Activated naive CD4-positive, alpha-beta T cell treated with anti-CD3 and anti-CD28 coated beads for 36 hours (primary cell): ENCODE measurements at regions of chr6 and their contacts with region 1.

Region 1: DNA sequence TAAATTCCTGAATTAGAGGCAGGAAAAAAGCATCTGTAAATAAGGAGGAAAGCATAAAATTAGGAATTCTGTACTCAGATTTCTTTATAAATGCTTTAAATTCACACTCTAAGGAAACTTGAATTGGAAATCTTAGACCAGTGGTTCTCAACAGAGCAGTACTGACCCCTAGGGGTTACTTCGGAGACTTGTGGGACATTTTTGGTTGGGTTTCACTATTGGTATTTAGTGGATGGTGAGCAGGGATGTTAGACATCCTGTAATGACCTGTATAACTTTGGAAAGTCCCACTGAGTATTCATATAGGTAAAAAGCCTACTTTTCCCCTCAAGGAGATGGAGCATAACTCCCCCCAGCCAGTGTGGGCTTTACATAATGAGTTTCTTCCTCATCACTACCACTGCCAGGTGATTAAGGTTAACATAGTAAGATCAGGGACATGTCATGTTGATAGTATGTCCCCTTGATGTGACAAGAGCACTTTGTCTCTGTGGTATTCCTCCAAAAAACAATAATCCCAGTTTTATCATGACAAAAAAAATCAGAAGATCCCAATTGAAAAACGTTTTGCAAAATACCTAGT is 31.0 kb downstream of the GLO1 start:
- DNase-seq: peak; percentile 56
- H3K4me3 Mint-ChIP-seq: no peak overlapping the region
- H3K27ac Mint-ChIP-seq: peak overlapping the region; percentile 66
- H3K4me1 Mint-ChIP-seq: peaks cover 45% of the 10 kb centered on the region
- H3K27me3 Mint-ChIP-seq: no peaks in the 10 kb centered on the region

Region 2: GRCh38 chr6:37516076-37516919 is 1155.7 kb before region 1 on chr6:
- CTCF ChIA-PET with region 1: no interaction called
- intact Hi-C with region 1: loop called (anchors 10 kb)
- DNase-seq: peak; percentile 98
- H3K4me3 Mint-ChIP-seq: peak overlapping the region; percentile 72
- H3K27ac Mint-ChIP-seq: peak overlapping the region; percentile 97
- H3K4me1 Mint-ChIP-seq: peaks cover 82% of the 10 kb centered on the region
- H3K27me3 Mint-ChIP-seq: no peaks in the 10 kb centered on the region

Region 3: DNA sequence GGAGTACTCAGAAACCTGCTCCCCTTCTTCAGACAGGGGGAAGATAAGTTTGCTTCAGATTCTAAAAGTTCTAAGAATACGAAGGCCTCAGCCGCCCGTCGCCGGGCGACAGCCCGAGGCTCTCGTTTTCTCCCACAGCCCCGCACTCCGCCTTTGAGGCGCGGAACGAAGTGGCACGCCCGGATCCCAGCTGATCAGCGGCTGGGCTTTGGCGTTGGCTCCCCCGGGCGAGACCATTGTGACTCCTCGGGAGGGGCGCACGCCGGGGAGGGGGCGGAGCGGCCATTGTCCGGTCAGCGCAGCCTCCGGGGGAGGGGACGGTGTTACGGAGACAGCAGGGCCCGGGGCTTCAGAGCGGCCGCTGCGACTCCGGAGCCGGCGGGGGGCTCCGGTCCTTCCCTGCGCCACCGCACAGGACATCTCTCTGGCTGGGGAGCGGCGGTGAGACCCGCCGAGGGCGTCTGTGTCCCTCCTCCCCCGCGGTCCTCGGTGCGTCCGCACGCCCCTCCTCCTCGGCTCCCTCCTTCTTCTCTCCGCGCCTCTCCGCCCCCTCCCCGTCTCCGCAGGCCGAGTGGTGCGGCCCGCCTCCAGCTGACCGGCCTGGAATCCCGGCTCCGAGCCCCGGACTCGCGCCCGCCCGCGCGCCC is 852.7 kb before region 1 on chr6 and contains the start of gene ZFAND3:
- CTCF ChIA-PET with region 1: no interaction called
- intact Hi-C with region 1: loop called (anchors 5 kb)
- DNase-seq: peak; percentile 95
- H3K4me3 Mint-ChIP-seq: peak within 1 kb of the TSS; percentile 92
- H3K27ac Mint-ChIP-seq: peak within 1 kb of the TSS; percentile 98
- H3K4me1 Mint-ChIP-seq: peaks cover 52% of the 10 kb centered on the region
- H3K27me3 Mint-ChIP-seq: no peaks in the 10 kb centered on the region
- total RNA-seq, gene ZFAND3: 33.6 to 35.3 TPM

Region 4: GRCh38 chr6:38131527-38131965 is 540.4 kb before region 1 on chr6:
- CTCF ChIA-PET with region 1: no interaction called
- intact Hi-C with region 1: loop called (anchors 2 kb)
- DNase-seq: peak; percentile 33
- H3K4me3 Mint-ChIP-seq: no peak overlapping the region
- H3K27ac Mint-ChIP-seq: peak overlapping the region; percentile 55
- H3K4me1 Mint-ChIP-seq: peaks cover 44% of the 10 kb centered on the region
- H3K27me3 Mint-ChIP-seq: no peaks in the 10 kb centered on the region

Region 5: DNA sequence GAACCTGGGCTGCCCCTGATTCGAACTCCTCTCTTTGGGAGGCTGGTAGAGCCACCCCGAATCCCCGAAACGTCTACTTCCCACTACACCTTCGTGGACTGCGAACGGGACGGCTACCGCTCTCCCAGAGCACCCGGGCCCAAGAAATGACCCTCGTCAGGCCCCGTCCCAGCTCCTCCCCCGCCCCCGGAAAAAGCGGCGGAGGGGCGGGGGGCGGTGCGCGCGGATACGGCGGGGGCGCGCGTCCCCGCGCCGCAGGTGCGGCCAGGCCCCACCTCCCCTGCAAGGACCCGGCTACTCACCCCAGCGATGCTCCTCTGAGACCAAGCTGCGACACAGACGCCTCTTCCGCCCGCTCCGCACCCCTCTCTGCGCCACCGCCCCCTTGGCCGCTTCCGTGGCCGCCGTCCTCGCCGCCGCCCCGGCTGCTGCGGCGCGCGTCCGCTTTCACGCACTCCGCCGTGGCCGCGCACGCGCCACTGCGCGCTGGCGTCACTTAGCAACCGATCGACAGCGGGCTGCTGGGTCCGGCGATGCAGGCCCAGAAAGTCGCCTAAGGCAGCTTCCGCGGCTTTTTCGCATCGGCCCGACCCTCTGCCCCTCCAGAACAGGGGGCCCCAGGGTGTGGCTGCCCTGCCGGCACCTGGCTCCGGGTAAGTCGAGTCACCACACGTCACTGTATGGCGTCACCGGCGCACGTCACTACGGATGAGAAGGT is 32.3 kb before region 1 on chr6 and contains the start of gene BTBD9:
- CTCF ChIA-PET with region 1: no interaction called
- intact Hi-C with region 1: loop called (anchors 1 kb)
- DNase-seq: peak; percentile 79
- H3K4me3 Mint-ChIP-seq: peak within 1 kb of the TSS; percentile 89
- H3K27ac Mint-ChIP-seq: peak within 1 kb of the TSS; percentile 86
- H3K4me1 Mint-ChIP-seq: peaks cover 47% of the 10 kb centered on the region
- H3K27me3 Mint-ChIP-seq: no peaks in the 10 kb centered on the region
- total RNA-seq, gene BTBD9: 9.5 to 11.1 TPM

Region 6: GRCh38 chr6:38755177-38755576 is 83.2 kb after region 1 on chr6:
- CTCF ChIA-PET with region 1: no interaction called
- intact Hi-C with region 1: loop called (anchors 2 kb)
- DNase-seq: no peak
- H3K4me3 Mint-ChIP-seq: no peak overlapping the region
- H3K27ac Mint-ChIP-seq: peak overlapping the region; percentile 79
- H3K4me1 Mint-ChIP-seq: peaks cover 39% of the 10 kb centered on the region
- H3K27me3 Mint-ChIP-seq: peaks cover 2% of the 10 kb centered on the region